Activated naive CD4-positive, alpha-beta T cell treated with anti-CD3 and anti-CD28 coated beads for 36 hours (primary cell): ENCODE measurements at regions of chr19 and their contacts with region 1.

Region 1: GRCh38 chr19:49676690-49677231 is 310 bp upstream of the PRMT1 start:
- DNase-seq: peak; percentile 100
- H3K4me3 Mint-ChIP-seq: peak overlapping the region; percentile 91
- H3K27ac Mint-ChIP-seq: peak overlapping the region; percentile 99
- H3K4me1 Mint-ChIP-seq: peaks cover 29% of the 10 kb centered on the region
- H3K27me3 Mint-ChIP-seq: no peaks in the 10 kb centered on the region

Region 2: GRCh38 chr19:49451430-49452181 is 225.2 kb before region 1 on chr19 and contains the start of gene PIH1D1:
- CTCF ChIA-PET with region 1: no interaction called
- intact Hi-C with region 1: loop called (anchors 2 kb)
- DNase-seq: peak; percentile 99
- H3K4me3 Mint-ChIP-seq: peak within 1 kb of the TSS; percentile 100
- H3K27ac Mint-ChIP-seq: peak within 1 kb of the TSS; percentile 100
- H3K4me1 Mint-ChIP-seq: peaks cover 40% of the 10 kb centered on the region
- H3K27me3 Mint-ChIP-seq: no peaks in the 10 kb centered on the region
- total RNA-seq, gene PIH1D1: 80.7 to 84.4 TPM

Region 3: GRCh38 chr19:49497047-49497788 is 179.5 kb before region 1 on chr19:
- CTCF ChIA-PET with region 1: interaction called, 4 read pairs
- intact Hi-C with region 1: loop called (anchors 1 kb)
- DNase-seq: peak; percentile 79
- H3K4me3 Mint-ChIP-seq: peak overlapping the region; percentile 87
- H3K27ac Mint-ChIP-seq: peak overlapping the region; percentile 96
- H3K4me1 Mint-ChIP-seq: peaks cover 49% of the 10 kb centered on the region
- H3K27me3 Mint-ChIP-seq: no peaks in the 10 kb centered on the region

Region 4: GRCh38 chr19:49524812-49525455 is 151.8 kb before region 1 on chr19:
- CTCF ChIA-PET with region 1: no interaction called
- intact Hi-C with region 1: no loop called
- DNase-seq: no peak
- H3K4me3 Mint-ChIP-seq: no peak overlapping the region
- H3K27ac Mint-ChIP-seq: no peak overlapping the region
- H3K4me1 Mint-ChIP-seq: peaks cover 14% of the 10 kb centered on the region
- H3K27me3 Mint-ChIP-seq: no peaks in the 10 kb centered on the region

Region 5: GRCh38 chr19:49570138-49570856 is 106.5 kb before region 1 on chr19:
- CTCF ChIA-PET with region 1: interaction called, 13 read pairs
- intact Hi-C with region 1: loop called (anchors 1 kb)
- DNase-seq: peak; percentile 88
- H3K4me3 Mint-ChIP-seq: no peak overlapping the region
- H3K27ac Mint-ChIP-seq: peak overlapping the region; percentile 0
- H3K4me1 Mint-ChIP-seq: peaks cover 53% of the 10 kb centered on the region
- H3K27me3 Mint-ChIP-seq: no peaks in the 10 kb centered on the region

Region 6: GRCh38 chr19:49590071-49590970 is 86.4 kb before region 1 on chr19:
- CTCF ChIA-PET with region 1: interaction called, 3 read pairs
- intact Hi-C with region 1: loop called (anchors 1 kb)
- DNase-seq: peak; percentile 96
- H3K4me3 Mint-ChIP-seq: peak overlapping the region; percentile 77
- H3K27ac Mint-ChIP-seq: peak overlapping the region; percentile 85
- H3K4me1 Mint-ChIP-seq: peaks cover 25% of the 10 kb centered on the region
- H3K27me3 Mint-ChIP-seq: no peaks in the 10 kb centered on the region

Region 7: GRCh38 chr19:49665351-49666119 is 11.2 kb before region 1 on chr19 and contains the starts of genes BCL2L12 and IRF3:
- CTCF ChIA-PET with region 1: interaction called, 8 read pairs
- intact Hi-C with region 1: loop called (anchors 1 kb)
- DNase-seq: peak; percentile 100
- H3K4me3 Mint-ChIP-seq: peak within 1 kb of the TSS; percentile 98
- H3K27ac Mint-ChIP-seq: peak within 1 kb of the TSS; percentile 93
- H3K4me1 Mint-ChIP-seq: peaks cover 35% of the 10 kb centered on the region
- H3K27me3 Mint-ChIP-seq: no peaks in the 10 kb centered on the region
- total RNA-seq, gene BCL2L12: 70.5 to 75.6 TPM
- total RNA-seq, gene IRF3: 85.2 to 97.8 TPM

Region 8: GRCh38 chr19:49746206-49747091 is 69.7 kb after region 1 on chr19:
- CTCF ChIA-PET with region 1: no interaction called
- intact Hi-C with region 1: no loop called
- DNase-seq: peak; percentile 46
- H3K4me3 Mint-ChIP-seq: no peak overlapping the region
- H3K27ac Mint-ChIP-seq: no peak overlapping the region
- H3K4me1 Mint-ChIP-seq: no peaks in the 10 kb centered on the region
- H3K27me3 Mint-ChIP-seq: no peaks in the 10 kb centered on the region

Region 9: GRCh38 chr19:50025024-50025789 is 348.4 kb after region 1 on chr19 and contains the start of gene VRK3:
- CTCF ChIA-PET with region 1: no interaction called
- intact Hi-C with region 1: loop called (anchors 1 kb)
- DNase-seq: peak; percentile 99
- H3K4me3 Mint-ChIP-seq: peak within 1 kb of the TSS; percentile 95
- H3K27ac Mint-ChIP-seq: peak within 1 kb of the TSS; percentile 97
- H3K4me1 Mint-ChIP-seq: peaks cover 50% of the 10 kb centered on the region
- H3K27me3 Mint-ChIP-seq: no peaks in the 10 kb centered on the region
- total RNA-seq, gene VRK3: 45.7 to 54.3 TPM